ENCODE measurements at regions of chr2 and their contacts with region 1.

Region 1: DNA sequence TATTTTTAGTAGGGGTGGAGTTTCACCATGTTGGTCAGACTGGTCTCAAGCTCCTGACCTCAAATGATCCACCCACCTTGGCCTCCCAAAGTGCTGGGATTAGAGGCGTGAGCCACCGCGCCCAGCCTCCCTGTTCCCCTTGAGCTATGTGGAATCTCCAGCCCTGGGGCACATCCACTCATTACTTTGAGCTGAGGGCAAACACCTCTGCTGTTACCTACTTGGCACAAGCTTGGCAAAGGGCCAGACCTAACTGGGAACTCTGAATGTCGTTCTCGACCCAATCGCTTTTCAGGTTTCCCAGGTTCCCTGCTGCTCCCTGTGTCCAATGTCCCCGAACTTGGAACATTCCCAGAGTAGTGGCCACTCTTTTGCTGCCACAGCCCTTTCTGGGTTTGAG is 40.6 kb downstream of the CHST10 start:
- DNase-seq: no peak
- H3K4me3 ChIP-seq: no peak overlapping the region
- H3K27ac ChIP-seq: no peak overlapping the region
- H3K4me1 ChIP-seq: no peaks in the 10 kb centered on the region
- H3K27me3 ChIP-seq: no peaks in the 10 kb centered on the region
- CTCF ChIP-seq: no peak

Region 2: DNA sequence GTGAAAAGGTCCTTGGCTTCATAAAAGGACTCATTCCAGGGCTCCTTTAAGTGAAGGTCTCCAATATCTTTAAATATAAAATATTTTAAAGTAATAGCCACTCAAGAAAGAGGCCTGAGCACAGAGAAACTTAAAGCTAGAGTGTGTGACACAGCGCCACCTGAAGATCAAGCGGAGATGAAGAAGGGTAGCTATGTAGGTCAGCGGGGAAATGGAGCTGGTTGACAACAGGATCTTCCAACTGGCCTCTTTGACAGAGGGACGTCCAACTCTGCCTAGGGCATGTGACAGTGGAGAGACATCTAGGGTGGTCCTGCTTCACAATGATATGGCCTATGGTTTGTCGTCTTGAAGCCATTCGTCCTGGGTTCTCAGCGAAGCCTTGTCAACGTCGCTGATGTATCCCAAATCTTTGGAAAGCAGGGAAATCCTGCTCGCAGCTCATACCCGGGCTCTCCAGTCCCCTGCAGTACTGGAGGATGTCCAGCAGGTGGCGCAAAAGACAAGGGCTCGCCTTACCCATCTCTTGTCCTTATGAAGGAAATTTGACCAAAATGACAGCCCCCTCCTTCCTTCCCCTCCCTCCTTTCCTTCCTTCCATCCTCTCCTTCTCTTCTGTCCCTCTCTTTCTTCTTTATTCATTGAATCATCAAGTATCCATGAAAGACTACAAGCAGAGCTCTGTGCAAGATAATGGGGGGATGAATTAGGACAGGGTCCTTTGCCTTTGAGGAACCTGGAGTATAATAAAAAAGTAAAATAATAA is 114.1 kb before region 1 on chr2:
- intact Hi-C with region 1: loop called (anchors 10 kb)
- DNase-seq: peak in 4 of 5 donors; percentile 66 to 80 (median 78)
- H3K4me3 ChIP-seq: no peak overlapping the region
- H3K27ac ChIP-seq: no peak overlapping the region
- H3K4me1 ChIP-seq: no peaks in the 10 kb centered on the region
- H3K27me3 ChIP-seq: peaks cover 2% of the 10 kb centered on the region
- CTCF ChIP-seq: peak; percentile 97

Region 3: GRCh38 chr2:100529900-100530299 is 153.1 kb after region 1 on chr2:
- intact Hi-C with region 1: no loop called
- DNase-seq: no peak
- H3K4me3 ChIP-seq: no peak overlapping the region
- H3K27ac ChIP-seq: no peak overlapping the region
- H3K4me1 ChIP-seq: no peaks in the 10 kb centered on the region
- H3K27me3 ChIP-seq: no peaks in the 10 kb centered on the region
- CTCF ChIP-seq: no peak

Measured in kidney (tissue), 22 donors.